CD4-positive, alpha-beta memory T cell (primary cell): ENCODE measurements at regions of chr3 and their contacts with region 1.

Region 1: DNA sequence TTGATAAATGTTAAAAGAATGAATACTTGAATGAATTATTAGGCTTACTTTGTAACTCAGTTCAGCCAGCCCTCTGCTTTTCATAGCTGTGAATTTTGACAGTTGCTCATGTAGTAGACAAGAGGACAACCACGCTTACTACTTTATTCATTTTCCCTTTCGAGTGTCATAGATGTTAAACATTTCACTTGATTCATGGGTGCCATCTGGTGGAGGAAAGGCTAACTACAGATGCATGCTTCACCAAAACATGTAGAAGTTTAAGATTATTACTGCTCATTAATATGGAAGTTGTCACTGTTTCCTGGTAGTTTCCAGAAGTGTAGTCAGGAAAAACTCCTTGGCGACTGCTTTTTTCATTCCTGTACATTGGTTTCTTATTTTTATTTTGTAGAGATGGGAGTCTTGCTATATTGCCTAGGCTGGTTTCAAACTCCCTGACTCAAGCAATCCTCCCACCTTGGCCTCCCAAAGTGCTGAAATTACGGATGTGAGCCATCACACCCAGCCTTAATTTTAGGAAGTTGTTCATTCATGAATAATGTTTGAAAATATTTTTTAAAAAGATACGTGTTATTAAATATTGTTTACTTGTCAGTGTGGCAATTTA is 163.2 kb downstream of the B3GALNT1 start:
- DNase-seq: peak; percentile 52 to 65 (median 58)
- H3K4me3 ChIP-seq: no peak overlapping the region
- H3K4me3 Mint-ChIP-seq: no peak overlapping the region
- H3K27ac ChIP-seq: no peak overlapping the region
- H3K27ac Mint-ChIP-seq: no peak overlapping the region
- H3K4me1 ChIP-seq: no peaks in the 10 kb centered on the region
- H3K4me1 Mint-ChIP-seq: peaks cover 0 to 4% (median 3%) of the 10 kb centered on the region in 4 donors
- H3K27me3 ChIP-seq: no peaks in the 10 kb centered on the region
- H3K27me3 Mint-ChIP-seq: no peaks in the 10 kb centered on the region

Region 2: GRCh38 chr3:159884661-159885402 is 1057.2 kb before region 1 on chr3:
- CTCF ChIA-PET with region 1: interaction called, 3 read pairs
- POLR2A ChIA-PET with region 1: no interaction called
- intact Hi-C with region 1: loop called (anchors 10 kb)
- DNase-seq: peak in 3 of 5 donors; percentile 9 to 15 (median 15)
- H3K4me3 ChIP-seq: no peak overlapping the region
- H3K4me3 Mint-ChIP-seq: no peak overlapping the region
- H3K27ac ChIP-seq: no peak overlapping the region
- H3K27ac Mint-ChIP-seq: peak overlapping the region in 1 of 7 donors; percentile 32
- H3K4me1 ChIP-seq: no peaks in the 10 kb centered on the region
- H3K4me1 Mint-ChIP-seq: no peaks in the 10 kb centered on the region
- H3K27me3 ChIP-seq: no peaks in the 10 kb centered on the region
- H3K27me3 Mint-ChIP-seq: peaks cover 3 to 10% of the 10 kb centered on the region in 2 donors

Region 3: GRCh38 chr3:160686955-160687535 is 254.9 kb before region 1 on chr3:
- CTCF ChIA-PET with region 1: interaction called, 37 read pairs
- POLR2A ChIA-PET with region 1: no interaction called
- intact Hi-C with region 1: loop called (anchors 1 kb)
- DNase-seq: peak in 3 of 5 donors; percentile 6 to 11 (median 7)
- H3K4me3 ChIP-seq: no peak overlapping the region
- H3K4me3 Mint-ChIP-seq: no peak overlapping the region
- H3K27ac ChIP-seq: no peak overlapping the region
- H3K27ac Mint-ChIP-seq: no peak overlapping the region
- H3K4me1 ChIP-seq: no peaks in the 10 kb centered on the region
- H3K4me1 Mint-ChIP-seq: no peaks in the 10 kb centered on the region
- H3K27me3 ChIP-seq: no peaks in the 10 kb centered on the region
- H3K27me3 Mint-ChIP-seq: peaks cover 2 to 6% of the 10 kb centered on the region in 2 donors

Region 4: DNA sequence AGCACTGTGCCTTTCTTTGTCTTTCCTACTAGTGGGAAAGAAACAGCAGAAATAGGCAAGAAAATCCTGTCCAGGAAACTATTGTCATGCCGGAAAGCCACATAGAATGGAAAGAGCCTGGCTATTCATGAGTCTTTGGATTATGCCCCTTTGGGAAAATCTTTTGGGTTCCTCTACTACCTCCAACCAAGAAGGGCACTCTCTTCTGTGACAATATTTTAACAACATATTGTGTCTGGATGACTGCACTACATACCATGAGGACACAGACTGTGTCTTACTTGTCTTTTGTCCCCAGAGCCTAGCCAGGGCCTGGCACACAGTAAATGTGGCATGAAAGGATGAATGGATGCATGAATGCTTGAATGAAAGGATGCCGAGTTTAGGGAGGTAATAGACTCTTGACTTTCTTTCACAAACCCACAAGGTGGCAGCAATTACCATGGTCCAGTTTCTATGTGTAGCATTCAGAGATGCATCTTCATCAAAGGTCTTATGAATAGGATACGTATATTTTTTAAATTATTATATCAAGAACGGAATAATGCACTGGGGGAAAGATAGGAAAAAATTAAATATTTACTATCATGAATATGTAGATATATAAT is 234.7 kb before region 1 on chr3:
- CTCF ChIA-PET with region 1: interaction called, 72 read pairs
- POLR2A ChIA-PET with region 1: no interaction called
- intact Hi-C with region 1: loop called (anchors 1 kb)
- DNase-seq: peak in 4 of 5 donors; percentile 36 to 44 (median 40)
- H3K4me3 ChIP-seq: no peak overlapping the region
- H3K4me3 Mint-ChIP-seq: no peak overlapping the region
- H3K27ac ChIP-seq: no peak overlapping the region
- H3K27ac Mint-ChIP-seq: no peak overlapping the region
- H3K4me1 ChIP-seq: no peaks in the 10 kb centered on the region
- H3K4me1 Mint-ChIP-seq: no peaks in the 10 kb centered on the region
- H3K27me3 ChIP-seq: no peaks in the 10 kb centered on the region
- H3K27me3 Mint-ChIP-seq: peaks cover 24 to 36% of the 10 kb centered on the region in 2 donors